Activated naive CD8-positive, alpha-beta T cell treated with anti-CD3 and anti-CD28 coated beads, Interleukin-2, amount 10 ng/mL, durations not matched to agents 7 days and 5 days (primary cell): ENCODE measurements at regions of chr2 and their contacts with region 1.

Region 1: DNA sequence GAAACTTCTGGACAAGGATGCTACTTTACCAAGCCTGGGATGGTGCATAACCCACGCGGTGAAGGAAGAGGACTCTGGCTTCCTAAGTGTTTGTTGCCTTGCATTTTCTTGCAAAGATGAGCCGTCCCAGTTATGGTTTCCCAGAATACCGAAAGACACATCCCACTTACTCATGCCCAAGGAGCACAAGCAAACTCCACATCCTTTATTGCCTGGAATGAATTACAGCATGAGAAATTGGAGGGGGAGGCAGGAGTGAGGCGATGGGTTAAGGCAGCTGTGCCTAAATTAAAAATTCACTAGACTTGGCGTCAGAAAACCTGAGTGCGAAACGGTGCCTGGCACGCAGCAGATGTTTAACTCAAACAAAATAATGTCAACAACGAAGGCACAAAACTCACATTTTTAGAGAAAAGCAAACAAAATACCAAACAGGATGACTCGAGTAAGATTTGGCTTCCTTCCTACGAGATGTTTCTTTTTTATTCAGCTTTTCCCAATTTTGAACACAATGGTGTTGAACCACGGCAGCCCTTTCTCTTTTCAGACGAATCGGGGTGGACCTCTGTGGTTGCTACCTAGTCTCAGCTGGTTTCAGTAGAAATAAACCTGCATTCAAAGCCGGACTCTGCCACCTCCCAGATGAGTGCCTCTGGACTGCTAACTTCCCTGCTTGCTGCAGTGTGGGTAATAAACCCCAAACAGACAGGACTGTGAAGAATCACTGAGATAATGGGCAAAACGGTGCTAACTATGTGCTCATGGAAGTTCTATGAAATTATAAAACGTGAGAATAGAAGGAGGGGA is 100.3 kb upstream of the NCK2 start:
- DNase-seq: no peak
- ATAC-seq: no peak
- H3K4me3 Mint-ChIP-seq: no peak overlapping the region
- H3K27ac Mint-ChIP-seq: no peak overlapping the region
- H3K4me1 Mint-ChIP-seq: no peaks in the 10 kb centered on the region
- H3K27me3 Mint-ChIP-seq: no peaks in the 10 kb centered on the region

Region 2: GRCh38 chr2:107027205-107027604 is 1382.8 kb after region 1 on chr2:
- POLR2A ChIA-PET with region 1: interaction called, 10 read pairs
- DNase-seq: no peak
- ATAC-seq: no peak
- H3K4me3 Mint-ChIP-seq: no peak overlapping the region
- H3K27ac Mint-ChIP-seq: no peak overlapping the region
- H3K4me1 Mint-ChIP-seq: no peaks in the 10 kb centered on the region
- H3K27me3 Mint-ChIP-seq: no peaks in the 10 kb centered on the region